ENCODE measurements at regions of chr2 and their contacts with region 1.

Region 1: GRCh38 chr2:218245214-218245613 is 15.6 kb upstream of the GPBAR1 start:
- DNase-seq: no peak
- ATAC-seq: no peak
- H3K4me3 Mint-ChIP-seq: no peak overlapping the region
- H3K27ac Mint-ChIP-seq: peak overlapping the region; percentile 18
- H3K4me1 Mint-ChIP-seq: no peaks in the 10 kb centered on the region
- H3K27me3 Mint-ChIP-seq: no peaks in the 10 kb centered on the region
- CTCF ChIP-seq: no peak

Region 2: DNA sequence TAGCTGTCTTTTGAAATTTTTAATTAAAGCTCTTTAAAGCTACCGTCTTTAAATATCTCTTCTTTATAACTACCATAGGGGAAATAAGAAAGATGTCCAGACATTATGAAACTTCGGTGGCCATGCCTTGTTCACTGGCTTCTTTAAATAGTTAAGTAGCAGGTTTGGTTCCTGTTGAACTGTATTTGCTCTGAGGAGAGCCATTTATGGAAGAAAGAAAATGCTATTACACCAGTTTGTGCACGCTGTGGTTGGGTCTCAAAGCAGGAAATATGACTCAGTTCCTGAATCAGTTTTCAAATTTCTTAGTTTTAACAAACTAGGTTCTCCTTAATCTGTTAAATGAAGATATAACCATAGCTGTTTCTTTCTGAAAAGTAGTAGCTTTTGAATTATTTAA is 16.0 kb before region 1 on chr2:
- CTCF ChIA-PET with region 1: no interaction called
- POLR2A ChIA-PET with region 1: interaction called, 4 read pairs
- intact Hi-C with region 1: loop called (anchors 2 kb)
- DNase-seq: no peak
- ATAC-seq: peak; percentile 91
- H3K4me3 Mint-ChIP-seq: peak overlapping the region; percentile 56
- H3K27ac Mint-ChIP-seq: peak overlapping the region; percentile 87
- H3K4me1 Mint-ChIP-seq: peaks cover 67% of the 10 kb centered on the region
- H3K27me3 Mint-ChIP-seq: no peaks in the 10 kb centered on the region
- CTCF ChIP-seq: no peak

Region 3: DNA sequence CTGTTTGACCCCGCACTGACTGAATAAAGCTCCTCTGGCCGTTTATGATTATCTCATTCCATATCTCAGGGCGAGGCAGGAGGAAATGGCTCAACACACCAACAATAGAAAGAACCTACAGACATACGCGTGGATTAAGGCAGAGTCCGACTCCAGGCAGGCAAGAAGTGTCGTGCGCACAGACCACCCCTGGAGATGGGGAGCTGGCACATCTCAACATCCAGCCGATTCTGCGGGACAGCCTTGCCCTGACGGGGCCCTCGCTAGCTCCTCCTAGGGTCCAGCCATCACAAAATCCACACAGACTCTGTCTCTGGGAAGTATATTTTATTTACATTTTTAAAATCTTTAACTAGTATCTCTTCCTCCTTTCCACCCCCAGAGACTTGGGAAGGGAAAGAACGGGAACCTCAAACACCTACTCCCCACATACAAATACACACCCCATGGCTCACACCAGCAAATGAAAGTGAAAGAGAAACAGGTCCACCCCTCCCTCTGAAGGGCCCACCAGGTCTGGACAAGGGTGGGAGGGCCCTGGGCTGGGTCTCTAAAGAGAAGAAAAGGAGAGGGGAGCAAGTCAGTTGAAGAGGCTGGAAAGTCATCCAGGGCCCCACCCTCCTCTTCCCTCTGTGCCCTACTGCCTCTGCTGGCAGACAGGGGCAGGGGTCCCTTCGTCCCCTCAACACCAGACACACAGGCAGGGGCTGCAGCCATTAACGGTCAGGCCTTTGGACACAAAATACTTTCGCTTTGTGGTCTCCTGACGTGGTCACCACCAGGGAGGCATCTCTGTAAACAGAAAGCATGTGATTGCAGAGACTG is 18.8 kb after region 1 on chr2:
- CTCF ChIA-PET with region 1: no interaction called
- POLR2A ChIA-PET with region 1: no interaction called
- intact Hi-C with region 1: no loop called
- DNase-seq: no peak
- ATAC-seq: no peak
- H3K4me3 Mint-ChIP-seq: no peak overlapping the region
- H3K27ac Mint-ChIP-seq: no peak overlapping the region
- H3K4me1 Mint-ChIP-seq: peaks cover 55% of the 10 kb centered on the region
- H3K27me3 Mint-ChIP-seq: no peaks in the 10 kb centered on the region
- CTCF ChIP-seq: no peak

Region 4: DNA sequence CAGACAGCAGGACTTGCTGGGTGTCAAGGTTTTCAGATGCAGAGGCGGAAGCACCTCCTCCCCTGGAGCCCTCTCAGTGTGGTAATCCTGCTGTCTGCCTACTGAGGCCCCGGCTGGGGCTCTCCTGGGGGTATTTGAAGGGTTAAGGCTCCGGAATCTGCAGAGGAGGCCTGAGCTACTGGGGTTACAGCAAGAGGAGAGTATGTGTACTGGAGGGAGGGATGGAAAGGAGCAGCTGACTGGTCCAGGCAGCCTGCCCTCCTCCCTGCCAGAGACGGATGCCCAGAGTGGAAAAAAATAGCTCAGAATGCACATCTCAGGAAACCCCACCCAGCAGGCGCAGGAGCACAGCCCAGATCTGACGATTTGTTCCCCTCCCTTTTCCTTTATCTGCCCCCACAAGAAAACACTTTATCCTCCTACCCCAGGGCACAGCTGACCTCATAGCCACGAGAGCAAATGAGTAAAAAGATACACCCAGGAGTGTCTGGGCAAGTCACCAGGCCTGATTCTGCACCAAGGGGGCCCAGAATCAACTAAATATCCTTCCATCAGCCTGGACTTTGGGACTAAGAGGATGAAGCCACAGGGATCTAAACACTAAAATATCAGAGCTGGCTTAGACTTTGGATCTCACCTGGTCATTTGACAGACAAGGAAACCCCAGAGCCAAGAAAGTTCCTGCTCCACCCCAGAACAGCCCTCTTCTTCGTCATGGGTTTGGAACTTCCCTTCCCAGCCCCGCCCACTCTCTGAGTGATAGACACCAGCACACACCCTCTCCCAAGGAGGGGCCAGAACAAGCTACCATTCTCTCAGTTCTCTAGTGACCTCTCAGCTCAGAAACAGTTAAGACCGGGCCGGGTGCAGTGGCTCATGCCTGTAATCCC is 41.6 kb after region 1 on chr2:
- CTCF ChIA-PET with region 1: no interaction called
- POLR2A ChIA-PET with region 1: no interaction called
- intact Hi-C with region 1: no loop called
- DNase-seq: peak; percentile 63
- ATAC-seq: peak; percentile 73
- H3K4me3 Mint-ChIP-seq: peak overlapping the region; percentile 77
- H3K27ac Mint-ChIP-seq: peak overlapping the region; percentile 94
- H3K4me1 Mint-ChIP-seq: peaks cover 91% of the 10 kb centered on the region
- H3K27me3 Mint-ChIP-seq: no peaks in the 10 kb centered on the region
- CTCF ChIP-seq: no peak

Region 5: DNA sequence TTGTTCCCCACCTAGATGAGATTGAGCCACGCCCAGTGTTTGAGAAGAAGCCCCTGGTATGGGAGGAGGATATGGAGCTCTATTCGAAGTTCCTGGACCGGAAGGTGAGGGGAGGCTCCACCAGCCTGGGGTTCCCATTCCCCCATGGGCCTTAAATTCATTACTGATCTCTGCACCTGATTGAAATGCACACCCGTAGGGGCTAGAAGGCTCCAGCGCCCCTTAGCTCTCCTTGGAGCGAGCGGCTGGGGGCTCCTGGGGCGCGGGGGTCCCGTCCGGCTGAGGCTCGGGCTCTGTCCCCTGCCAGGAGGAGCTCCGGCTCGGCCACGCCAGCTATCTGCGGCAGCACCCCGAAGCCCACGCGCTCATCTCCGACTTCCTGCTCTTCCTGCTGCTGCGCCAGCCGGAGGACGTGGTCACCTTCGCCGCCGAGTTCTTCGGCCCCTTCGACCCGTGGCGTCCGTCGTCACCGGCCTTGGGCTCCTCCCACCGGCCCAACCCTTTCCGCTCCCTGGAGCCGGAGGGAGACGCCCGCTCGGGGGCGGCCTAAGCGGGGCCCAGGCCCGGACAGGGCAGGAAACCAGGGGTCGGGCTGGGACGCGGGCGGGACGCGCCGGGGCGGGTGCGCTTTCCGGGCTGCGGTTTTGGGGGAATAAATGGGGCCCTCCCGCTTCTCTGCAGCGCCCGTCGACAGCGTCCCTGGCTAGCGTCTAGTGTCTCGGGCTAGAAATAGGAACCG is 122.4 kb after region 1 on chr2:
- CTCF ChIA-PET with region 1: no interaction called
- POLR2A ChIA-PET with region 1: no interaction called
- intact Hi-C with region 1: no loop called
- DNase-seq: peak; percentile 74
- ATAC-seq: peak; percentile 86
- H3K4me3 Mint-ChIP-seq: peak overlapping the region; percentile 85
- H3K27ac Mint-ChIP-seq: peak overlapping the region; percentile 84
- H3K4me1 Mint-ChIP-seq: peaks cover 36% of the 10 kb centered on the region
- H3K27me3 Mint-ChIP-seq: no peaks in the 10 kb centered on the region
- CTCF ChIP-seq: no peak